IMR-90 (cell line): ENCODE measurements at regions of chr5 and their contacts with region 1.

Region 1: DNA sequence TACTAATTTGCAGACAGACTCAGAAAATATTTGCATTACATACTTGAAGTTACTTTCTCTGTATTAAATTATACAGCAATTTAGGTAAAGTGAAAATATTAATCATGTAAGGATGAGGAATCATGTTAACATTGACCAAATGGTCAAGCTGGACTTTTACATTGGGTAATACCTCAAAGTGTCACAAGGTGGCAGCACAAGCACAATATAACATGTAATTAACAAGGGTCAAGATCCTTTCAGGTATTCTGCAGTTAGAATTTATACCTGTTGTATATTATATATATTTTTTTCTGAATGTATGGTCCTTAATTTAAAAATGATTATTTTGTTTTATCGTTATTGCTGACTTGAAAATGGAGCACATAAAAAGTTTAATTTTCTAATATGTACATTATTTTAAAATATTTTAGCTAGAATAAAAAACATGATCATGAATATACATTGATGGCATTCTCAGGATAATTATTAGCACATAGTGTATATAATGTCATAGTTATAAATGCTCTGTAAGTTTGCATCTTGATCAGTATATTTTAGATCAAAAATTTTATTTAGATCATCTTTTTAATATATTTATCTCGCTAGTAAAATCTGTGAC is 8.6 kb downstream of the HAPLN1 start:
- DNase-seq: peak; percentile 35
- ATAC-seq: peak; percentile 74
- H3K4me3 ChIP-seq: no peak overlapping the region
- H3K27ac ChIP-seq: no peak overlapping the region
- H3K4me1 ChIP-seq: peaks cover 3% of the 10 kb centered on the region
- H3K27me3 ChIP-seq: peaks cover 8% of the 10 kb centered on the region
- CTCF ChIP-seq: peak; percentile 63
- POLR2A ChIP-seq: no peak
- RAD21 ChIP-seq: peak; percentile 63

Region 2: DNA sequence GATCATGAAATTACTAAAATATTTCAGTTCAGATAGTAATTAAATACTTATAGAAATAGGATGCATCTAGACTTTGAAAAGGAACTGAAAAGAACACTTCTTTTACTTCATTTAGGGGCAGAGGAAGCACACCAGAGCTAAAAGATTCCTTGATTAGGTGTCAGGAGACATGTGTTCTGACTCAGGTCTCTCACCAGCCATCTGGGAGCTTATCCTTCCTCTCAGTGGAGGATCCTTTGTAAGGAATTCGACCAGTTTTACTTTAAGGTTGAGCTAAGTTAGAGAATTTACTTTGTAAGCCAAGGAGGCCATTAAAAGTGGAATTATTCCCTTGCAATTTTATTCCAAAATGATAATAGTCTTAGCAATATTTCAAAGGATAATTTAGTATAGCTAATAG is 223.8 kb before region 1 on chr5:
- CTCF ChIA-PET with region 1: no interaction called
- POLR2A ChIA-PET with region 1: no interaction called
- dilution Hi-C with region 1: no loop called
- in situ Hi-C with region 1: no loop called
- intact Hi-C with region 1: no loop called
- DNase-seq: peak; percentile 81
- ATAC-seq: peak; percentile 63
- H3K4me3 ChIP-seq: no peak overlapping the region
- H3K27ac ChIP-seq: peak overlapping the region; percentile 59; the same call in 1 of the 2 replicates
- H3K4me1 ChIP-seq: peaks cover 3% of the 10 kb centered on the region
- H3K27me3 ChIP-seq: no peaks in the 10 kb centered on the region
- CTCF ChIP-seq: no peak
- POLR2A ChIP-seq: no peak
- RAD21 ChIP-seq: no peak

Region 3: DNA sequence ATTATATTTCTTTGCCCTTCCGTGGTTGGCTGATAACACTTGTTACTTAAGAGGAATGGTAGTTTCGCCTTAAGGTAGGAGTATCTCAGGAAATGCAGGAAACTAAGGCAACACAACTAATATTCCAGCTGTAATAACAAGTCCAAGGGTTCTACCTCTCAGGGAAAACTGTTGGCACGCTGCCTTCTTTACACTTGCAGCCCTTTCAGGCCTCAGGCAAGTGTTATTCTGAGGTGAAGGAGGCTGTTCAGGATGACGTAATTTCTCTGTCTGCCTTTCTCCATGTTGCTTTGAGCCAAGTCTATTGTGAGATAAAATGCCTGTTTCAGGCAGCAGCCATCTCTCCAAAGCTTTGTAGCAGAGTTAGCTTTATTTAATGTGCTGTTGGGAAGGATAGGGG is 202.6 kb before region 1 on chr5:
- CTCF ChIA-PET with region 1: no interaction called
- POLR2A ChIA-PET with region 1: no interaction called
- dilution Hi-C with region 1: no loop called
- in situ Hi-C with region 1: no loop called
- intact Hi-C with region 1: no loop called
- DNase-seq: peak; percentile 71
- ATAC-seq: peak; percentile 49
- H3K4me3 ChIP-seq: no peak overlapping the region
- H3K27ac ChIP-seq: no peak overlapping the region
- H3K4me1 ChIP-seq: peaks cover 5% of the 10 kb centered on the region
- H3K27me3 ChIP-seq: no peaks in the 10 kb centered on the region
- CTCF ChIP-seq: no peak
- POLR2A ChIP-seq: no peak
- RAD21 ChIP-seq: no peak

Region 4: DNA sequence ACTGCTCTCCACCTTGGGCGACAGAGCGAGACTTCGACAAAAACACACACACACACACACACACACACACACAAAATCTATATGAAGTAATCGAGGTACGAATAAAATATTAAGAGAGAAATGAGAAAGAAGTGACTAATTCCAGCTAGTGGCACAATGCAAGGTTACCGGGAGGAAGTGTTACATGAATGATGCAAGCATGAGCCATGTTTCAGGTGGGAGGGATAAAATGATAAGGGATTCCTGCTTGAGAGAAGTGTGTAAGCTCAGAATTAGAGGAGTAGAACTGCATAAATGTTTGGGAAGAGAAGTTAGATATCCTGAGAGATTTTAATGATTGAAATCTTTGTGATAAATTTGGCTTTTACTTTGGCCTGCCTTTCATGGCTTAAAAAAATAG is 10.2 kb before region 1 on chr5:
- CTCF ChIA-PET with region 1: interaction called, 10 read pairs
- POLR2A ChIA-PET with region 1: no interaction called
- dilution Hi-C with region 1: no loop called
- in situ Hi-C with region 1: no loop called
- intact Hi-C with region 1: no loop called
- DNase-seq: peak; percentile 6
- ATAC-seq: no peak
- H3K4me3 ChIP-seq: no peak overlapping the region
- H3K27ac ChIP-seq: no peak overlapping the region
- H3K4me1 ChIP-seq: no peaks in the 10 kb centered on the region
- H3K27me3 ChIP-seq: no peaks in the 10 kb centered on the region
- CTCF ChIP-seq: no peak
- POLR2A ChIP-seq: no peak
- RAD21 ChIP-seq: no peak